KBM-7 (cell line): ENCODE measurements at regions of chr20 and their contacts with region 1.

Region 1: DNA sequence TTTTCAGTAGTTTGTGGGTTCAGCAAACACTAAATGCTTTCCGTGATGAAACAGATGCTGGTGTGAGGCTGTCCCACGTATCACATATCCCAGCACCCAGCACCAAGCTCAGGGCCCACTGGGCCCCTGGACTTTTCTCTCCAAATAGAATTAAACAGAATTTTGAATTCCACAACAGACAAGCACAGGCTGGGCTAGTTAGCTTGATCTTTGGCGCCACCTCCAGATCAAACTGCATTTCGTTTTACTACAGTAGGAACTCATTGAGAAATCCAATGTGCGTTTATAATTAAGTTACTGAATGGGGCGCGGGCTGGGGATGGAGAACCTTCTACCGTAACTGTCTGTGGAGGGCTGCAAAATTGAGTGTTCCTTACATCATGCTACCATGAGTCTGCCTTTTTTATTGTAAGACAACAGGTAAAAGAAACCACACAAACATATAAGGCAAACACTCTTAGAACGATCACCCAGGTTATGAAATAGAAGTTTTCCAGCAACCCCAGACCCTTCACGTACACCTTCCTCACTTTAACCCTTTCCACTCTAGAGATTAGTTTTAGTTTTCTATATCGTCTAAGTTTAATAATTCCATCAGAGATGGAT is 107.8 kb downstream of the ZFP64 start:
- DNase-seq: peak; percentile 47

Region 2: DNA sequence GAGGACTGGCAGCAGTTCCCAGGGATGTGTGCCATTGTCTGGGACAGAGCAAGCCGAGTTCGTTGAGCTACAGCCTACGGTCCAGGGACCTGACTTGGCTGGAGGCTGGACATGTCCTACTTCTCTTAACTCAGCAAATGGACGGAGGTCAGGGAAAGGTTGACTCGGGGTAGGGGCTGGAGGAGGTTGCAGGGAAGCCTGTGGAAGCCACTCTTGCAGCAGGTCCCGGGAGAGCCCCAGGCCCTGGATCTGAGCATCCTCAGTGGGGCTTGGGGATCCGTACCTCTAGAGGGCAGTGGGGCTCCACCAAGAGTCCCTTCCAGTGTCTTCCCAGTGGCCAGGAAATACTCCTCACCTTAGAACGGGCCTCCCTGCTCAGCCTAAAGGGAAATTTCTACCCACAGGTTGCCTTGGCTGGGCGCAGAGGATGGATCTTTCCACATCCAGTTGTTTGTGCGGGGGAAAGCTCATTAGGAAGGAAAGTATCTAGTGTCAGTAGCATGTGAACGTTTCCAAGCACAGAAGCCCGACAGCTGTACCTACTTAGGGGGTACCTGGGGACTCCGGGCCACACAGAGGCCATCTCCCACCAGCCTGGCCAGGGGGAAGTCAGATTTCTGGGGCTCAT is 711.4 kb before region 1 on chr20:
- in situ Hi-C with region 1: loop called (anchors 25 kb)
- DNase-seq: peak; percentile 65

Region 3: GRCh38 chr20:51447097-51447771 is 636.5 kb before region 1 on chr20:
- in situ Hi-C with region 1: no loop called
- DNase-seq: no peak

Region 4: DNA sequence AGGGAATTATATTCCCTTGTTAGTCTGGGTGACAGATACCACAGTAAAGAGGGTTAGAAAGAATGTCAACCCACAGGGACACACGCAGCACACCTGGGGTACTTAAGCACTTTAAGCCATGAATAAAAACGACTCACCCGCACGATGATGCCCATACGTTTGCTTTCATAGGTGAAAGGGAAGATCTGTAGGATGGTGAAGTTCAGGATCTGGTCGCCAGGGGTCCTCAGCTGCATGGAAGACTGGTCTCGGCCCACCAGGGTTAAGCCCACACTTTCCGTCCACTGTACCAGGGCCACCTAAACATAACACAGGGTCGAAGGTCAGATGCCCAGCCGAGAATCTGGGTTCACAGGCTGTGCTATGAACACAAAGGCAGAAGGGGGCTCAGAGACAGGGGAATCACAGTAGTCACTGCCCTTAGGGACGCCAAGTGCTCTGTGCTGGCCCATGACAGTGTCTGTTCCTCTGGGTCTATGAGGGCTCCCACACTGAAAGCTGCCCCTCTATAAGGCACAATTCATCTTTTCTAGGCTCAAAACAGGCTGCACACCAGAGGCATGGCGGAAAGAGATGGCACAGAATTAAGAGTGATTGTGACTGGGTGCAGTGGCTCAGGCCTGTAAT is 444.4 kb before region 1 on chr20:
- in situ Hi-C with region 1: loop called (anchors 25 kb)
- DNase-seq: peak; percentile 75